Activated CD4-positive, alpha-beta T cell treated with anti-CD3 and anti-CD28 coated beads for 36 hours (primary cell): ENCODE measurements at regions of chr9 and their contacts with region 1.

Region 1: DNA sequence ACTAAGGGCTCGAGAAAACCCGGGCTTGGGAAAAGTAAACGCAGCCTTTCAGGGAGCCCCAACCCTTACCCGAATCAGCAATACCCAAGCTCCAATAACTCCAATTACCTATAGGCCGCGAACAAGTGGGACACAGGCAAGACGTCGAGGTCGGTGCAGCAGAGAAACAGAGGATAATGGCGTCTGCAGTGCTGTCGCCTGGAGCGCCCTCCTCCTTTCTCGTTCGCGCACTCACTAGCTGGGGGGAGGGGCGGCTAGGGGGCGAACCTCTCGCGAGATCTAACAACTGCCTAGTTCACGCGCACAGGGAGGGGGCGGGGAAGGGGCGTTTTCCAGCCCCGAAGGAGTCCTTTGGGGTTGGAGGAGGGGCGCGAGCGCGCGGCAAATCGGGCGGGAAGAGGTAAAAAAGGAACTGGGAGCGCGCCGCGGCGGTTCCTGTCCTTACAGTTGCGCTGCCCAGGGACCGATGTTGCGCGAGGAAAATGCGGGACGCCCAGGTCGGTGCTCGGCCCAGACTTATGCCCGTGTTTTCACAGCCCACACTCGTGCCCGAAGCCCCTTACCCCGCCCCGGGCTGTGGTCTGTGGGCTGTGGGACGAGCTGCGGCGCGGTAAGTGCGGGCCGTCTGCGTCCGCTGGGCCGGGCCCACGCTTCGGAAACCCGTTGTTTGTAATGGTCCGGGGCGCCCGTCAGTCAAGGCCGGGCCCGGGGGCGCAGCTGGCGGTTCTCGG is at the start of gene RMI1:
- DNase-seq: peak; percentile 100
- ATAC-seq: peak; percentile 78
- H3K4me3 Mint-ChIP-seq: peak within 1 kb of the TSS; percentile 100
- H3K27ac Mint-ChIP-seq: peak within 1 kb of the TSS; percentile 99
- H3K4me1 Mint-ChIP-seq: peaks cover 37% of the 10 kb centered on the region
- H3K27me3 Mint-ChIP-seq: no peaks in the 10 kb centered on the region
- total RNA-seq, gene RMI1: 25.0 to 25.5 TPM

Region 2: GRCh38 chr9:83707768-83708514 is 272.6 kb before region 1 on chr9 and contains the start of gene UBQLN1:
- CTCF ChIA-PET with region 1: interaction called, 4 read pairs
- POLR2A ChIA-PET with region 1: interaction called, 3 read pairs
- intact Hi-C with region 1: loop called (anchors 1 kb)
- DNase-seq: peak; percentile 94
- ATAC-seq: peak; percentile 80
- H3K4me3 Mint-ChIP-seq: peak within 1 kb of the TSS; percentile 80
- H3K27ac Mint-ChIP-seq: peak within 1 kb of the TSS; percentile 100
- H3K4me1 Mint-ChIP-seq: peaks cover 40% of the 10 kb centered on the region
- H3K27me3 Mint-ChIP-seq: no peaks in the 10 kb centered on the region
- total RNA-seq, gene UBQLN1: 88.3 to 116 TPM

Region 3: DNA sequence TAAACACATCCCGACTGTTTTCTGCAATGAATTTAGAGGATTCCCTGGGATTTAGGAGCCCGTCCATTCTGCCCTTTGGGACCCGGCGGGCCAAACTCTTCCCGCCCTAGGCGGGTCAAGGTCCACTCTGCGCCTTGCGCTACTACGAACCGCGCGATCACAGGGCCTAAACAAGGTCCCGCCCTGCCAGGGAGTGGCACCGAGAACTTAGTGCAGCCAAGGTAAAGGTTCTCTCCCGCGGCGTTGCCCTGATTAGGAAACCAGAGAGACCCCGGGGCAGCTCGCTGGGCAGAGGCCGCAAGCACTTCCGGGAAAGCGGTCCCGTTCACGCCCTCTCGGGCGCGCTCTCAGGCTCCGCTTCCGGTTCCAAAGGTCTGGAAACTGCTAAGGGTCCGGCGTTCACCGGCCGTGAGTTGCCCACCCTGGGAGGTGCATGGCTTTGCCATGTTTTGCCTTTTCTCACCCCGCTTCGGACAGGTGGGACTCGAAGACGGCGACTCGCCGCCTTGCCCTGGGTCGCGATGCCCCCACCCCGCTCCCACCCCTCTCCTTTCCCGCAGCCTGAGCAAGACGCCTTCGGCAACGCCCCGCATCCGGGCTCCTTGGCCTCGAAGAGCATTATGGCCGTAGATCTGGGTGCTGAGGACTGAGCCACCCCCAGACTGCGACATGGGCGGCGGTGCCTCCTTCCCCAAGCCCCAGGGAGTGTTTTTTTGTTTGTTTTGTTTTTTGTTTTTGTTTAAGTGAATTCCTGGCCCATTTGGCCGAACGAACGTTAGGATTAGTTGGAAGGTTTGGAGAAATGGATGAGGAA is 23.9 kb before region 1 on chr9:
- CTCF ChIA-PET with region 1: interaction called, 5 read pairs
- POLR2A ChIA-PET with region 1: interaction called, 11 read pairs
- intact Hi-C with region 1: loop called (anchors 1 to 2 kb)
- DNase-seq: peak; percentile 81
- ATAC-seq: peak; percentile 80
- H3K4me3 Mint-ChIP-seq: peak overlapping the region; percentile 96
- H3K27ac Mint-ChIP-seq: peak overlapping the region; percentile 97
- H3K4me1 Mint-ChIP-seq: peaks cover 20% of the 10 kb centered on the region
- H3K27me3 Mint-ChIP-seq: no peaks in the 10 kb centered on the region

Region 4: DNA sequence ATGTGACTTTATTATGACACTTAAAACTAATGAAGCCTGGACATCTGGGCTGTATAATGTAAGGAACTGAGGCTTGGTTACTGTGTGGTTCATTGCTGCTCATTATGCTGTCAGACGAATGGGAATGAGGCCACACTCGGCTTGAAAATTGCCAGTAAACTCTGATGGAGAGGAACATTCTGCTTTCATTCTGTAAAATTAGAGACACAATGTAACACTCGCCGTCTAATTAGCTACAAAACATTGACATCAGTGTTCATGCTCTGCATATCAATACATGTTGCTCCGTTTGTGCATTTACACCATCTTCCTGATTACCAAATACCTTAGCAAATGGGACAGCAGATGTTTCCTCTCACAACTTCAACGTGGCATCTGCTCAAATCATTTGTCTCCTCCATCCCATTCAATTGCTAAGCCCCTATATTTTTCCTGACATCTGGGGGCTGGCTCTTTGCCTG is 227.0 kb after region 1 on chr9:
- CTCF ChIA-PET with region 1: no interaction called
- POLR2A ChIA-PET with region 1: no interaction called
- intact Hi-C with region 1: no loop called
- DNase-seq: no peak
- ATAC-seq: no peak
- H3K4me3 Mint-ChIP-seq: no peak overlapping the region
- H3K27ac Mint-ChIP-seq: no peak overlapping the region
- H3K4me1 Mint-ChIP-seq: peaks cover 2% of the 10 kb centered on the region
- H3K27me3 Mint-ChIP-seq: peaks cover 7% of the 10 kb centered on the region

Region 5: DNA sequence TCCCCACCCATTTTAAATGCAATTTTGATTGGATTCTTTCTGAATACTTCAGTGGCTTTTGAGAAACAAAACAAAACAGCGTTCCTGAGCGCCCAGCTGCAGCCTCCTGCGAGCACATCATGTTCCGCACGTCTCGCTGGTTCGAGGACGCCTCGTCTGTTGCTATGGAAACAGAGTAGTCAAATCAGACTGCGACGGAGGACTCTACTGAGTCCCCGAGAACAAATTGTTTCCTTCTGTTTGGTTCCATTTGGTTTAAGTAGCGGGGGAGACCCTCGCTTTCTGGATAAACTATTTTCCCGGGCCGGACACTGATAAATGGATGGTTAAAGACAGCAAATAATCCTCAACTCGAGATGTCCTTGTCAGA is 291.0 kb after region 1 on chr9:
- CTCF ChIA-PET with region 1: no interaction called
- POLR2A ChIA-PET with region 1: no interaction called
- intact Hi-C with region 1: loop called in 1 of 2 experiments (anchors 1 kb)
- DNase-seq: peak; percentile 87
- ATAC-seq: peak; percentile 98
- H3K4me3 Mint-ChIP-seq: peak overlapping the region; percentile 72
- H3K27ac Mint-ChIP-seq: peak overlapping the region; percentile 67
- H3K4me1 Mint-ChIP-seq: peaks cover 7% of the 10 kb centered on the region
- H3K27me3 Mint-ChIP-seq: peaks cover 32% of the 10 kb centered on the region

Region 6: DNA sequence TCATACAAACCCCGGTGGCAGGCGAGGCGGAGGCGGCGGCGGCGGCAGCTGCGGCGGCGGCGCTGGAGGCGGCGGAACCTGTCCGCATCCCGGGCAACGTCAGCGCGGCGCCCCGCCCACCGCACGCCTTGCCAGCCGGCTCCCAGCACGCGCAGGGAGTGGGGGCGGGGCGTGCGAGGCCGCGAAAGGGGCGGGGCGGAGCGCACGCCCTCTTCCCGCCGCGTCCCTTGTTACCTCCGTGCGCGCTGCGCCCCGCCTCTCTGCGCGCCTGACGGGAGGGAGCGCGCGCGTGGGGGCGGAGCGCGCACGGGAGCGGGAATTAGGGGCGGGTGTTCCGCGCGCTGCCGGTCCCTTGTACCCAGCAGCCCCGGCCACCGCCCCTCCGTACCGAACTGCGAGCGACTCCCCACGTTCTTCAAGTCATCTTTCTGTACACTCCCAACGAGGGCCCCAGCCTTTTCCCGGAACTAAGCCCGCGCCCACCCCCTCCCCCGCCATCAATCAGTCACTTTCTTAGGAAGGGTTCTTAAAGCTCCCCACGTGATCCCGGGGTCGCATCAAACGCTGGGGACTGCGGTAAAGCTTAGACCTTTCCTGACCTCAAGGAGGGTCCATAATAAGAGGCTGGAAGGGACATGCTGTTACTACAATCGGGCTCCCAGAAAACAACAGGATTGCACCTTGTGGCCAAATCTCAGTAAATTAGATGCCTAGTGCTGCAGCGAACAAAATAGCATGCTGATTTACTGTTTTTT is 1761.5 kb after region 1 on chr9 and contains the start of gene AGTPBP1:
- CTCF ChIA-PET with region 1: no interaction called
- POLR2A ChIA-PET with region 1: no interaction called
- intact Hi-C with region 1: loop called in 1 of 2 experiments (anchors 1 kb)
- DNase-seq: peak; percentile 99
- ATAC-seq: peak; percentile 83
- H3K4me3 Mint-ChIP-seq: peak within 1 kb of the TSS; percentile 86
- H3K27ac Mint-ChIP-seq: peak within 1 kb of the TSS; percentile 96
- H3K4me1 Mint-ChIP-seq: peaks cover 38% of the 10 kb centered on the region
- H3K27me3 Mint-ChIP-seq: peaks cover 3% of the 10 kb centered on the region
- total RNA-seq, gene AGTPBP1: 39.8 to 45.9 TPM